ENCODE measurements at regions of chr1 and their contacts with region 1.

Region 1: DNA sequence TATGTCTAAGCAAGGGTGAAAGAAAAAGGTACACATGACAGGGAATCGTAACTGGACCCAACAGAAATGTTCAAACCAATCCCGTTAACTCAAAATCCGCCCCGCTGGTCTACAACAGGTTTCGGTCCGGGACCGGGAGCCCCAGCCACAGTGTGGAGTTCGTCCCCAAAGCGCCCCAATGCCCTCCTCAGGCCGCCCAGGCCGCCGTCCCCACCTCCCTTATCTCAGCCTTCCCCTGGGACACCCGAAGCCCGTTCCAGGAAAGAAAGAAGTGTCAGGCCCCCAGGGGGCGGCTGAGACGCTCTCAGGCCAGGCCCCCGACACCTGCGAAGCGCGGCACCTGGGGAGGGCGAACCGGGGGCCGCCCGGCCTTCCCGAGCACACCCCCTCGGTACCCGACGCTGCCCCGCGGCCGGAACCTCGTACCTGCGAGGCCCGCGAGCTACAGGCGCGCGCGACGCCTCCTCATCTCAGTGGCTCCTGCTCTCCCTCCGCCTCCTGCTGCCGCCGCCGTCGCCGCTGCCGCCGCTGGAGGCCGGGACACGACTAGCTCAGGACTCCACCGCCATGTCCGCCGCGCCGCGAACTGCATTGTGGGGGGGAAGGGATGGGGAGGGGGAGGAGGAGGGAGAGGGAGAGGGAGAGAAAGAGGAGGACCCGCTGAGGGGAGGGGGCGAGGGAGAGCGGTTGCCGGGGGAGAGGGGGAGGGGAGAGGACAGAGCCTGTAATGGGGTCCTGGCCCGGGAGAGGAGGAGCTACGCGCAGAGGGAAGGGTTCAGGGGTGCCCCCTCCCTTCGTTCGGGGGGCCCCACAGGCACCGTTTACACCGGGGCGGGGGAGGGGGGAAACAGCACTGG is at the start of gene TUT4:
- DNase-seq: peak; percentile 69
- H3K4me3 Mint-ChIP-seq: peak within 1 kb of the TSS; percentile 49
- H3K27ac Mint-ChIP-seq: peak within 1 kb of the TSS; percentile 86
- H3K4me1 Mint-ChIP-seq: peaks cover 36% of the 10 kb centered on the region
- H3K27me3 Mint-ChIP-seq: peaks cover 3% of the 10 kb centered on the region
- total RNA-seq, gene TUT4: 62.5 and 67.8 TPM in 2 replicates

Region 2: DNA sequence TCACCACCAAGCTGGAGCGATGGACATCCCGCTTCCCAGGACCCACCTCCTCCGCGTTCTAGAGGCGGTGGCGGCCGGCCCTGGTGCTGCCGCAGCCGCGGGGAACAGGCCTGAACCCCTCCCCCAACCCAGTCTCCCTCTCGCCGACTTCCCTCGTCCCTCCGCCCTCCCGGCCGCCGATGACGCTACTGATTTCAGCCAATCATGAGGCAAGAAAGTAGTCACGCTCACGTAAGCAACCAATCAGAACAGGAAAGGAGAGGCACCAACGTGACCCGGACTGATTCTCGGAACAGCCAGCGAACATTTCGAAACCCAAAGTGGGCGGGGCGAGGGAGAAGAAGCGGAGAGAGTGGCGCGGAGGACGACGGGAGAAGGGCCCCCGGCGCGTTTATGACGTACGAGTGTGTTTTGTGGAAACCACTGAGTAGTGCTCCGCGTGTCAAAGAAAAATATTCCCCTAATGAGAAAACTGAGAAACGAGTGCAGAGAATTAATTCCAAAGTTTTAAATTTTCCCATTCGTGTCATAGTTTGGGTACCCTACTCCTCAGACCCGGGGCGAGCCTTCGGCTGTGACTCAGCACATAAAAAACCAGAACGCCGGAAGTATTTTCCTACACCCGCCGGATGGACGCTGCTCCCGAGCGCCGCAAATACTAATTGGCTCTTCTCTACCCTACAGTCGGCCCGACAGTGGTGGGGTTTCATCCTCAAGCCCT is 674.0 kb before region 1 on chr1 and contains the start of gene NRDC:
- intact Hi-C with region 1: loop called (anchors 2 kb)
- DNase-seq: peak; percentile 99
- H3K4me3 Mint-ChIP-seq: no peak within 1 kb of the TSS
- H3K27ac Mint-ChIP-seq: no peak within 1 kb of the TSS
- H3K4me1 Mint-ChIP-seq: no peaks in the 10 kb centered on the region
- H3K27me3 Mint-ChIP-seq: peaks cover 14% of the 10 kb centered on the region
- total RNA-seq, gene NRDC: 177 and 185 TPM in 2 replicates

Region 3: GRCh38 chr1:52404116-52404986 is 148.4 kb before region 1 on chr1 and contains the starts of genes ORC1 and PRPF38A:
- intact Hi-C with region 1: loop called (anchors 1 kb)
- DNase-seq: peak; percentile 94
- H3K4me3 Mint-ChIP-seq: peak within 1 kb of the TSS; percentile 100
- H3K27ac Mint-ChIP-seq: peak within 1 kb of the TSS; percentile 100
- H3K4me1 Mint-ChIP-seq: peaks cover 45% of the 10 kb centered on the region
- H3K27me3 Mint-ChIP-seq: no peaks in the 10 kb centered on the region
- total RNA-seq, gene ORC1: 39.6 and 40.3 TPM in 2 replicates
- total RNA-seq, gene PRPF38A: 103 and 105 TPM in 2 replicates

Region 4: DNA sequence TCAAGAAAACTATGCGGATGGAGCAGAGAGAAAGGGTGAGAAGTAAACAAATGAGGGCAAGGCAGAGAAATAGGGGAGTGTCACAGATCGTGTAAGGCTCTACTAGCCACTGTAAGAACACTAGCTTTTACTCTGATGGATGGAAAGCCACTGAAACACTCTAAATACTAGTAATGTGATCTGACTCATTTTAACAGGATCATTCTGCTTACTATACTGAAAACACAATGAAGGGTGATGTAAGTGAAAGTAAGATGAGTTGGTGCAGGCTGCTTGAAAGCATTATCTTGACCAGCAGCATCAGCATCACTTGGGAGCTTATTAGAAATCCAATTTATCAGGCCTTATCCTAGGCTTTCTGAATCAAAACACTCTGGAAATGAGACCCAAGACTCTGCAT is 32.6 kb before region 1 on chr1:
- intact Hi-C with region 1: loop called (anchors 1 kb)
- DNase-seq: no peak
- H3K4me3 Mint-ChIP-seq: no peak overlapping the region
- H3K27ac Mint-ChIP-seq: peak overlapping the region; percentile 73
- H3K4me1 Mint-ChIP-seq: peaks cover 26% of the 10 kb centered on the region
- H3K27me3 Mint-ChIP-seq: no peaks in the 10 kb centered on the region

Region 5: DNA sequence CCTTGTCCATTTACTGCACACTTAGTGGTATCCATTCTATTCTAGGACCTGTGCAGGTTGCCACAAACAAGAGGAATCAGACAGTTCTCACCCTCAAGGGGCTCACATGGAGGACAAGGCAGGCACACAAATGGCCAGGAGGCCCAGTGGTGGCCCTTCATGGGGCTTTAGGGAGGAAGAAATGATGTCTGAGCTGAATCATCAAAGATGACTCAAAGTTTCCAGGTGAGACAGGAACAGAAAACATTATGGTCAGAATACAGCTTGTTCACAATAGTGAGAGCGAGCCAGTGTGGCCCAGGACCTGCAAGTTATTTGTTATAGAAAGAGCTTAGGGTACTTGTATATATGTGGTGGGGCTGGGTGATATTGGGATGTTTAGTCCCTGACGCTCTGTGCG is 106.6 kb after region 1 on chr1:
- intact Hi-C with region 1: loop called (anchors 1 kb)
- DNase-seq: peak; percentile 20
- H3K4me3 Mint-ChIP-seq: peak overlapping the region; percentile 29
- H3K27ac Mint-ChIP-seq: peak overlapping the region; percentile 90
- H3K4me1 Mint-ChIP-seq: peaks cover 31% of the 10 kb centered on the region
- H3K27me3 Mint-ChIP-seq: no peaks in the 10 kb centered on the region

Region 6: GRCh38 chr1:52726265-52727113 is 173.8 kb after region 1 on chr1 and contains the start of gene ZYG11B:
- intact Hi-C with region 1: loop called (anchors 2 kb)
- DNase-seq: peak; percentile 88
- H3K4me3 Mint-ChIP-seq: peak within 1 kb of the TSS; percentile 88
- H3K27ac Mint-ChIP-seq: peak within 1 kb of the TSS; percentile 82
- H3K4me1 Mint-ChIP-seq: peaks cover 42% of the 10 kb centered on the region
- H3K27me3 Mint-ChIP-seq: no peaks in the 10 kb centered on the region
- total RNA-seq, gene ZYG11B: 8.4 and 8.5 TPM in 2 replicates

Region 7: GRCh38 chr1:54406339-54407153 is 1853.8 kb after region 1 on chr1 and contains the start of gene SSBP3:
- intact Hi-C with region 1: loop called (anchors 10 kb)
- DNase-seq: peak; percentile 91
- H3K4me3 Mint-ChIP-seq: peak within 1 kb of the TSS; percentile 88
- H3K27ac Mint-ChIP-seq: peak within 1 kb of the TSS; percentile 83
- H3K4me1 Mint-ChIP-seq: peaks cover 72% of the 10 kb centered on the region
- H3K27me3 Mint-ChIP-seq: no peaks in the 10 kb centered on the region
- total RNA-seq, gene SSBP3: 98.0 and 110 TPM in 2 replicates

Measured in activated T-helper 1 cell treated with anti-CD3 and anti-CD28 coated beads, Interleukin-12 subunit alpha, Interleukin-12 subunit beta, Interleukin-2, Interleukin-4 antibody, amounts not matched to agents 30 ng/mL and 10 ng/mL and 1 ng/mL, durations not matched to agents 14 hours and 24 hours and 36 hours (primary cell).